ENCODE measurements at regions of chr5 and their contacts with region 1.

Region 1: GRCh38 chr5:66239034-66239433 is 94.9 kb downstream of the SREK1 start:
- DNase-seq: peak; percentile 19
- ATAC-seq: no peak
- H3K4me3 ChIP-seq: no peak overlapping the region
- H3K27ac ChIP-seq: no peak overlapping the region
- H3K4me1 ChIP-seq: no peaks in the 10 kb centered on the region
- H3K27me3 ChIP-seq: 0 out of 2 replicates have a peak, but pooled peaks cover 8% of the 10 kb centered on the region
- CTCF ChIP-seq: peak; percentile 37 to 58 (median 41); a peak in 4 of 6 replicates
- POLR2A ChIP-seq: no peak
- RAD21 ChIP-seq: peak; percentile 68

Region 2: DNA sequence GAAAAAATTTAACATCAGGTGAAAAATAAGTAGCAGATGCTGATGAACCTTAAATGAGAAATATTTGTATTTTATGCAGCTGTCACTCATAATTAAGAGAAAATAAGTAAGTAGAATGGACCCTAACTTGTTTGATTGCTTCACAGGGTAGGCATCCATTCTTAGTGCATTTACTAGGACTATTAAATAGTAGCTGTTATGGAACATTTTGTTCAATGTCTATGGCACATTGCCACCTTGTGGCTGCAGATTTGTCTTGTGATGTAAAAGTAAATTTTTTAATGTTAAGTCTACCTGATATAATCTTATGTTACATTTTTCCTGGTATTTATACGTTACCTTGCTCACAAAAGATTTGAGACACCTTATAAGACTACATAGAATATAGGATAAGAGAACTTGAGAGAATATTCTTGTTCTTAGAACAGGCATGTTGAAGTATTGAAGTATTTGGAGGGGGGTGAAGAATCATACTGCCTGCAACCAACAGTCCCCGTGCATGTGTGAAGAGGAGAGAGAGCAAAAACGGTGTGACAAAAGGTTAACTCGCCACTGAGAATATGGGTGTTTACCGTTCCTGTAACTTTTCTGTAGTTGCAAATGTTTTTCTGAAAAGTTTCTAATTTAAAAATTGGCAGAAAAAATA is 518.3 kb after region 1 on chr5:
- CTCF ChIA-PET with region 1: interaction called, 3 read pairs
- POLR2A ChIA-PET with region 1: no interaction called
- RAD21 ChIA-PET with region 1: no interaction called
- intact Hi-C with region 1: loop called (anchors 5 kb)
- DNase-seq: peak; percentile 18
- ATAC-seq: peak; percentile 46; the same call in 1 of the 2 replicates
- H3K4me3 ChIP-seq: no peak overlapping the region
- H3K27ac ChIP-seq: no peak overlapping the region
- H3K4me1 ChIP-seq: no peaks in the 10 kb centered on the region
- H3K27me3 ChIP-seq: peaks cover 35% of the 10 kb centered on the region
- CTCF ChIP-seq: peak; percentile 14 to 58 (median 30); a peak in 3 of 6 replicates
- POLR2A ChIP-seq: no peak
- RAD21 ChIP-seq: peak; percentile 58